Caco-2 (cell line): ENCODE measurements at regions of chr9 and their contacts with region 1.

Region 1: GRCh38 chr9:110298043-110298605 is 39.5 kb downstream of the TXNDC8 start:
- DNase-seq: peak; percentile 74 to 76
- H3K4me3 ChIP-seq: no peak overlapping the region
- H3K4me3 Mint-ChIP-seq: peak overlapping the region; percentile 45
- H3K27ac Mint-ChIP-seq: peak overlapping the region; percentile 54
- H3K4me1 ChIP-seq: peaks cover 24% of the 10 kb centered on the region
- H3K4me1 Mint-ChIP-seq: peaks cover 21% of the 10 kb centered on the region
- H3K27me3 ChIP-seq: no peaks in the 10 kb centered on the region
- H3K27me3 Mint-ChIP-seq: no peaks in the 10 kb centered on the region
- CTCF ChIP-seq: no peak

Region 2: DNA sequence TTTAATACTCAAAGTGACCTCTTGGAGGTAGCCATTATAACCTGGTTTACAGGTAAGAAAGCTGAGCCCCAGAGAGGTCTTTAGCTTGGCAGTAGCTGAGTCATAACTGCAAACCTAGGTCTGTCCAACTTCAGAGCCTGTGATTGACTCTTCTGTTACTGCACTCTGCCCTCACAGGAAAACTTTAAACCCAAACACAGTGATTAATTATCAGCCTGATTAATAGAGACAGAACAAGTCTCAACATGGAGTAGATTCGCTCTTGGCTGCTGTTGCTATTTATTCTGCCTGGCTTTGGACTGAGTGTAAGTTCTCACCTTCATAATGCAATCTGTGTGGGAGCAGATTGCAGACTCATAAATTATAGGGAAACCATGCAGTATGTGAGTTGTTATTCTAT is 14.4 kb before region 1 on chr9:
- CTCF ChIA-PET with region 1: interaction called, 6 read pairs
- POLR2A ChIA-PET with region 1: no interaction called
- intact Hi-C with region 1: loop called (anchors 1 kb)
- DNase-seq: peak in 1 of 2 experiments; percentile 54
- H3K4me3 ChIP-seq: no peak overlapping the region
- H3K4me3 Mint-ChIP-seq: no peak overlapping the region
- H3K27ac Mint-ChIP-seq: no peak overlapping the region
- H3K4me1 ChIP-seq: peaks cover 40% of the 10 kb centered on the region
- H3K4me1 Mint-ChIP-seq: peaks cover 19% of the 10 kb centered on the region
- H3K27me3 ChIP-seq: no peaks in the 10 kb centered on the region
- H3K27me3 Mint-ChIP-seq: no peaks in the 10 kb centered on the region
- CTCF ChIP-seq: no peak

Region 3: GRCh38 chr9:110340314-110340713 is 42.2 kb after region 1 on chr9:
- CTCF ChIA-PET with region 1: no interaction called
- POLR2A ChIA-PET with region 1: no interaction called
- intact Hi-C with region 1: loop called (anchors 1 kb)
- DNase-seq: peak in 1 of 2 experiments; percentile 32
- H3K4me3 ChIP-seq: no peak overlapping the region
- H3K4me3 Mint-ChIP-seq: no peak overlapping the region
- H3K27ac Mint-ChIP-seq: no peak overlapping the region
- H3K4me1 ChIP-seq: no peaks in the 10 kb centered on the region; the same call in 1 of the 2 replicates
- H3K4me1 Mint-ChIP-seq: no peaks in the 10 kb centered on the region
- H3K27me3 ChIP-seq: no peaks in the 10 kb centered on the region
- H3K27me3 Mint-ChIP-seq: no peaks in the 10 kb centered on the region
- CTCF ChIP-seq: peak; percentile 49 to 56